IMR-90 (cell line): ENCODE measurements at regions of chr5 and their contacts with region 1.

Region 1: DNA sequence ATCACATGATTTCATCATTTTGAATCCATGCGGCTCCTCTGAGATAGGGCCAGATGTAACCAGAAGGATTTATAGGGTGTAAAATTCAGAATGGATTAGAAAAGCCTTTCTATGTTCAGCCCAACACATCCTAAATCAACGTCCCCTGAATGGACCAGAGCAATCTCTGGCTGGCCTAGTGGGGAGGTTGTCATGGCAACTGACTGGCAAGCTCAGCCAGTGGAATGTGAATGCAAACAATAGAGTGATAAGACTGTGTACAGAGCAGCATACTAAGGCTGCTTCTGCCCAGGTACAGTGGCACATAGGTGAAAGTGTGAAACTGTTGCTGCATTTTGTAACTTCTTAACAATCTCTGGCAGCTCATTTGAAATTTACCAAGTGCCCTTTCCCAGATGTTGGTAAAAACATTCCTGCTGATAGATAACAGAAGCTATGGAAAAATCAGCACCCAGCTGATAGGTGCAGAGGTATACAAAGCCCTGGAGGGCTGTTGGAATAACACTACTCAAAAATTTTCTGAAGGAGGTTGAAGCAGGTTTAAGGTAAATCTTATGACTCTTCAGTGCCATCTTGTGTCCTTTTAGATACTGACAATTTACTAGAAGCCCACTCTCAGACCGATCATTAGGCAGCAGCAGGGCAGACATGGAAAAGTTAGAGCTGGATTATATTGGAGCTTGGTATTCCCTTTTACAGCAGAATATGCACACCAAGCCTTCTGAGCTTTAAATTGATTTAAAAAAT is 267.2 kb downstream of the RAB3C start:
- DNase-seq: peak; percentile 26
- ATAC-seq: peak; percentile 70; the same call in 1 of the 2 replicates
- H3K4me3 ChIP-seq: no peak overlapping the region
- H3K27ac ChIP-seq: no peak overlapping the region
- H3K4me1 ChIP-seq: no peaks in the 10 kb centered on the region
- H3K27me3 ChIP-seq: peaks cover 7% of the 10 kb centered on the region
- CTCF ChIP-seq: peak; percentile 48
- POLR2A ChIP-seq: no peak
- RAD21 ChIP-seq: peak; percentile 37

Region 2: GRCh38 chr5:58477760-58478376 is 372.2 kb before region 1 on chr5:
- CTCF ChIA-PET with region 1: interaction called, 4 read pairs
- POLR2A ChIA-PET with region 1: no interaction called
- dilution Hi-C with region 1: no loop called
- in situ Hi-C with region 1: no loop called
- intact Hi-C with region 1: loop called (anchors 5 kb)
- DNase-seq: no peak
- ATAC-seq: peak; percentile 50
- H3K4me3 ChIP-seq: no peak overlapping the region
- H3K27ac ChIP-seq: no peak overlapping the region
- H3K4me1 ChIP-seq: no peaks in the 10 kb centered on the region
- H3K27me3 ChIP-seq: peaks cover 9% of the 10 kb centered on the region
- CTCF ChIP-seq: 0 out of 2 replicates have a peak, but pooled peaks have one; percentile 13
- POLR2A ChIP-seq: no peak
- RAD21 ChIP-seq: no peak

Region 3: GRCh38 chr5:58498340-58498942 is 351.7 kb before region 1 on chr5:
- CTCF ChIA-PET with region 1: interaction called, 4 read pairs
- POLR2A ChIA-PET with region 1: no interaction called
- dilution Hi-C with region 1: no loop called
- in situ Hi-C with region 1: loop called (anchors 10 kb)
- intact Hi-C with region 1: loop called (anchors 1 kb)
- DNase-seq: peak; percentile 41
- ATAC-seq: peak; percentile 79
- H3K4me3 ChIP-seq: no peak overlapping the region
- H3K27ac ChIP-seq: no peak overlapping the region
- H3K4me1 ChIP-seq: no peaks in the 10 kb centered on the region
- H3K27me3 ChIP-seq: peaks cover 7% of the 10 kb centered on the region
- CTCF ChIP-seq: peak; percentile 69
- POLR2A ChIP-seq: no peak
- RAD21 ChIP-seq: peak; percentile 48

Region 4: GRCh38 chr5:58505971-58506640 is 344.0 kb before region 1 on chr5:
- CTCF ChIA-PET with region 1: interaction called, 3 read pairs
- POLR2A ChIA-PET with region 1: no interaction called
- dilution Hi-C with region 1: no loop called
- in situ Hi-C with region 1: loop called (anchors 10 kb)
- intact Hi-C with region 1: no loop called
- DNase-seq: no peak
- ATAC-seq: no peak
- H3K4me3 ChIP-seq: no peak overlapping the region
- H3K27ac ChIP-seq: no peak overlapping the region
- H3K4me1 ChIP-seq: no peaks in the 10 kb centered on the region
- H3K27me3 ChIP-seq: peaks cover 3% of the 10 kb centered on the region
- CTCF ChIP-seq: no peak
- POLR2A ChIP-seq: no peak
- RAD21 ChIP-seq: no peak

Region 5: GRCh38 chr5:58622936-58623871 is 226.9 kb before region 1 on chr5:
- CTCF ChIA-PET with region 1: no interaction called
- POLR2A ChIA-PET with region 1: no interaction called
- dilution Hi-C with region 1: no loop called
- in situ Hi-C with region 1: no loop called
- intact Hi-C with region 1: no loop called
- DNase-seq: no peak
- ATAC-seq: no peak
- H3K4me3 ChIP-seq: no peak overlapping the region
- H3K27ac ChIP-seq: no peak overlapping the region
- H3K4me1 ChIP-seq: no peaks in the 10 kb centered on the region
- H3K27me3 ChIP-seq: no peaks in the 10 kb centered on the region
- CTCF ChIP-seq: no peak
- POLR2A ChIP-seq: no peak
- RAD21 ChIP-seq: no peak

Region 6: GRCh38 chr5:59640411-59640810 is 790.3 kb after region 1 on chr5:
- CTCF ChIA-PET with region 1: no interaction called
- POLR2A ChIA-PET with region 1: no interaction called
- dilution Hi-C with region 1: no loop called
- in situ Hi-C with region 1: no loop called
- intact Hi-C with region 1: no loop called
- DNase-seq: no peak
- ATAC-seq: no peak
- H3K4me3 ChIP-seq: no peak overlapping the region
- H3K27ac ChIP-seq: no peak overlapping the region
- H3K4me1 ChIP-seq: no peaks in the 10 kb centered on the region
- H3K27me3 ChIP-seq: no peaks in the 10 kb centered on the region
- CTCF ChIP-seq: no peak
- POLR2A ChIP-seq: no peak
- RAD21 ChIP-seq: no peak